ENCODE measurements at regions of chr2 and their contacts with region 1.

Region 1: DNA sequence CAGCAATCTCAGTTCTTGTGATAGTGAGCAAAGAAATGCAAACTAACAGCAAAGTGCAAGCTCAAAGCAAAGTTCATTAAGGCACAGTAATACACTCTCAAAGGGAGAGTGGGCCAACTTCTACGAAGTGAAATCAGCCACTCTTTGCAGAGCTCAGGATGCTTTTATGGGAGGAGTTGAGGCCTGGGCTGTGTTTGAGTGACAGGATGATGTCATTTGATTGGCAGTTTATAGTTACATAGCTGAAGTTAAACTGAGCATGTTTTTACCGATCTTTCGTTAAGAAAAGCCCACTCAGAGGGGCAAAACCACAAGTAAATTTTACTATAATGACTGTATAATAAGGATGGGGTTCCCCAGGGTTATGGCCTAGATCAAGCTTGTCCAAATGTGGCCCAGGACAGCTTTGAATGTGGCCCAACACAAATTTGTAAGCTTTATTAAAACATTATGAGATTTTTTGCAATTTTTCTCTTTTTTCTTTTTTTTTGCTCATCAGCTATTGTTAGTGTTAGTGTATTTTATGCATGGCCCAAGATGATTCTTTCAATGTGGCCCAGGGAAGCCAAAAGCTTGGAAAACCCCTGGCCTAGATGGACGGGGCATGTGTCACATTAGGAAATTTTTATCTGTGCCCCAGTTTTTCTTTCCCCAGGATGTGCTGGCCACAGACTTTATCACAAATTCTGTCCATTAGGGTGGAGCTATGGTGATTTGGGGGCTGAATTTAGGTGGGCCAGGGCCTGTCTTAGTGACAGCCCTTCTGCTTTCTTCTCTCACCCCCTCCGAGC is 8.3 kb upstream of the DNAH7 start:
- DNase-seq: no peak
- ATAC-seq: no peak
- H3K4me3 ChIP-seq: no peak overlapping the region
- H3K4me3 Mint-ChIP-seq: no peak overlapping the region
- H3K27ac ChIP-seq: no peak overlapping the region
- H3K27ac Mint-ChIP-seq: no peak overlapping the region
- H3K4me1 ChIP-seq: peaks cover 9 to 13% of the 10 kb centered on the region in 2 donors
- H3K4me1 Mint-ChIP-seq: peaks cover 10 to 34% (median 25%) of the 10 kb centered on the region in 7 donors
- H3K27me3 ChIP-seq: no peaks in the 10 kb centered on the region
- H3K27me3 Mint-ChIP-seq: no peaks in the 10 kb centered on the region

Region 2: DNA sequence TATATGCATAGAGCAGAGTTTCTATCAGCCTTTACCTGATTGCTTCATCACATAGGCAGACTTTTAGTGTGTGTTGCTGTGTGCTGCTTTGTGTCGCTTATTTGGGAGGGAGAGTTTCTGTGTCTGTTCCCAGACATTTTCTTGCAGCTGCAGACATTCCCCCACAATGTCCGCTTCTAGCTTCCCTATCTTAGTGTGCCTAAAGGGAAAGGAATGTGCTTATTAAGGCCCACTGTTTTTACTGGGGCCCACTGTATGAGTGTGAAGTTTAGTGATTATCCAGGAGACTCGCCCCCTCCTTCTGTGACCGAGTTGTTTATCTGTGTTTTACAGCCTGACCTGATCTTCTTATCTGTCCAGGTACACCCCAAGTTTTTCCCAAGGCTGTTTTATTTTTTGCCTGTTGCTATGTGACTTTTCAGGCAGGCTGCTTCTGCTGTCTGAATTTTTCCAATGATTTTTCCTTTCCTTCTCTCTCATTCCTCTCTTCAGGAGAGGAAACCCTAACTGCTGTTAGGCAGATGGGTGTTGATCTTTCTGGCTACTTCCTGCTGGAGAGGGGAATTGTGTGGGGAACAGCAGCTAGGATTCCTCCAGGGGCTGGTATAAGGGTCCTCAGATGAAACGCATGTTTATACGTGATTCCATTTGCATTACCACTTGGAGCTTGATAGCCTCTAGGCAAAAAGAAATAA is 46.9 kb after region 1 on chr2:
- CTCF ChIA-PET with region 1: no interaction called
- POLR2A ChIA-PET with region 1: no interaction called
- intact Hi-C with region 1: loop called in 1 of 2 experiments (anchors 5 kb)
- DNase-seq: no peak
- ATAC-seq: no peak
- H3K4me3 ChIP-seq: no peak overlapping the region
- H3K4me3 Mint-ChIP-seq: no peak overlapping the region
- H3K27ac ChIP-seq: no peak overlapping the region
- H3K27ac Mint-ChIP-seq: no peak overlapping the region
- H3K4me1 ChIP-seq: no peaks in the 10 kb centered on the region
- H3K4me1 Mint-ChIP-seq: peaks cover 0 to 4% (median 0%) of the 10 kb centered on the region in 7 donors
- H3K27me3 ChIP-seq: no peaks in the 10 kb centered on the region
- H3K27me3 Mint-ChIP-seq: no peaks in the 10 kb centered on the region

Region 3: DNA sequence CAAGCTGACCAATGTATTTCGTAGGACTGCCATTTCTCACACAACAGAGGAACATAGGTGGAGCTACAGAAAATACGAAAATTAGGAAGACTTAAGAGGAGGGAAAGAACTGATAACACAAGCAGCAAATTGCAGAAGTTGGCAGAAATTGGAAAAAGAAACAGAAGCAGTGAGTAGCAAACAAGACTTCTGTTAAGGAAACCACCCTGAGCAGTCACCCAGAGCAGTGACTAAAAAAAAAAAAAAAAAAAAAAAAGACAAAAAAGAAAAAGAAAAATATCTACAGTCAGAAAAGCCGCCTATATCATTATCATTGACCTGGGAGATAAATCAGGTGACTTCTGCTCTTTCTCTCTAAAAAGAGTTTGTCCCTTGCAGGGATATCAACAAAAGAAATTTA is 73.0 kb after region 1 on chr2:
- CTCF ChIA-PET with region 1: interaction called, 3 read pairs
- POLR2A ChIA-PET with region 1: interaction called, 3 read pairs
- intact Hi-C with region 1: loop called in 1 of 2 experiments (anchors 5 kb)
- DNase-seq: peak in 2 of 9 donors; percentile 19 to 49
- ATAC-seq: peak; percentile 48
- H3K4me3 ChIP-seq: no peak overlapping the region
- H3K4me3 Mint-ChIP-seq: peak overlapping the region; percentile 1 to 87 (median 72)
- H3K27ac ChIP-seq: peak overlapping the region; percentile 71
- H3K27ac Mint-ChIP-seq: peak overlapping the region; percentile 81 to 95 (median 90)
- H3K4me1 ChIP-seq: peaks cover 63 to 86% of the 10 kb centered on the region in 2 donors
- H3K4me1 Mint-ChIP-seq: peaks cover 49 to 99% (median 94%) of the 10 kb centered on the region in 7 donors
- H3K27me3 ChIP-seq: no peaks in the 10 kb centered on the region
- H3K27me3 Mint-ChIP-seq: no peaks in the 10 kb centered on the region

Region 4: GRCh38 chr2:196337208-196337953 is 260.4 kb after region 1 on chr2:
- CTCF ChIA-PET with region 1: interaction called, 42 read pairs
- POLR2A ChIA-PET with region 1: interaction called, 12 read pairs
- intact Hi-C with region 1: loop called (anchors 1 kb)
- DNase-seq: peak in 5 of 9 donors; percentile 10 to 39 (median 19)
- ATAC-seq: peak; percentile 52
- H3K4me3 ChIP-seq: no peak overlapping the region
- H3K4me3 Mint-ChIP-seq: no peak overlapping the region
- H3K27ac ChIP-seq: no peak overlapping the region
- H3K27ac Mint-ChIP-seq: no peak overlapping the region
- H3K4me1 ChIP-seq: no peaks in the 10 kb centered on the region
- H3K4me1 Mint-ChIP-seq: peaks cover 0 to 6% (median 1%) of the 10 kb centered on the region in 7 donors
- H3K27me3 ChIP-seq: no peaks in the 10 kb centered on the region
- H3K27me3 Mint-ChIP-seq: peaks cover 0 to 18% (median 3%) of the 10 kb centered on the region in 5 donors

Region 5: DNA sequence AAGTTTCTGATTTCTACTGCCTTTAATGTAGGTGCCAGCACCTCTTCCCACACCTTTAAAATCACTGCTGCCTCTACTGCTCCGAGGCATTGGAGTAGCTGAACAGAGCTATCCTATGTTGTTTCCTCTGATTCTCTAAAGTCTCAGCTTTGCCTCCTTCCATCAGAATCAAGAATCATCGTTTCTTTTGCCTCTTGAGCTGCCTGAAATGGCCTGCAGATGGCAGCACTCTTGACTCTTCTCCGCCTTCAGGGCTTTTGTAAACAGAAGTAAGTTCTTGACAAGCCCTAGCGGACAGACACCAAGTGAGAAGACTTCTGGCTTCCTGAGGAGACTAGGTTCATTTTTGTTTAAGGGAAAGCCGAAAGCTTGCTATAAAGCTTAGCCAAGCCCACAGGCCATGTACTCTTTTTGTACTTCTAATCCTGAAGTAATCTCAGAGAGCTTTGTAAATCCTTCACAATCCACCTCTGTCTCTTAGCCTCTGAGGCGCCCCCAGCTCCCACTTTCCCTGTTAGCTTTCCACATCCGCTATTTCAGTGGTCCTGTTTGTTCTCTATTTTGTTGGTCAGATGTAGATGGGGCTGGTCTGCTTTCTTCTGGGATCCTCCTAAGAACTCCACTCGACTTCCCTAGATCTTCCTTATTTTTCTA is 674.1 kb after region 1 on chr2:
- CTCF ChIA-PET with region 1: no interaction called
- POLR2A ChIA-PET with region 1: no interaction called
- intact Hi-C with region 1: loop called in 1 of 2 experiments (anchors 10 kb)
- DNase-seq: peak; percentile 17 to 62 (median 51)
- ATAC-seq: peak; percentile 95
- H3K4me3 ChIP-seq: no peak overlapping the region
- H3K4me3 Mint-ChIP-seq: peak overlapping the region in 2 of 10 donors; percentile 7 to 33
- H3K27ac ChIP-seq: no peak overlapping the region
- H3K27ac Mint-ChIP-seq: peak overlapping the region in 4 of 9 donors; percentile 21 to 33 (median 28)
- H3K4me1 ChIP-seq: no peaks in the 10 kb centered on the region
- H3K4me1 Mint-ChIP-seq: peaks cover 9 to 24% (median 16%) of the 10 kb centered on the region in 7 donors
- H3K27me3 ChIP-seq: no peaks in the 10 kb centered on the region
- H3K27me3 Mint-ChIP-seq: no peaks in the 10 kb centered on the region